ENCODE measurements at regions of chr1 and their contacts with region 1.

Region 1: DNA sequence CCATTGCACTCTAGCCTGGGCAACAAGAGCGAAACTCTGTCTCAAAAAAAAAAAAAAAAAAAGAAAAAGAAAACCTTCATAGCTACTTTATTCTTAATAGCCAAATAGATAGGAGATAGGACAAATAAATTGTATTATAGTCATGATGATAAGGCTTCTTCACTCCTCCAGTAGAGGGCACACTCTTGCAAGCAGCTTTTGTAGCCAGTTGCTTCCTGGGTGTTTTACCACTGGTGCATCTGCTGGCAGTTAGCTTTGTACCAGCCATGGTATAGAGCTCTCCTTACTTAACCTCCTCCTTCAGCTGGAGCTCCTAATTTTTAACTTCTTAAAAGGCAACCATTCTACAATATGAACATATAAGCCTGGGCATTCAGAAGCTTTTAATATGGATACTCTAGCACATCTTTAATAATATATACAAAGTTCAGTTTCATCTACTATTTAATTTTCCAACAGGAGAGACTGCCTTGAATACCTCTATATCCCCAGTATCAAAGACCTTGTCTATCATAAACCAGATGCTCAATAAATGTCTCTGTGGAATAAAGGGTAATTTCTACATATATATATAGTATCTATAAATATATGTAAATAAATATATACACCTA is 35.8 kb downstream of the EVI5 start:
- DNase-seq: no peak
- ATAC-seq: peak in 1 of 2 donors; percentile 83
- H3K4me3 ChIP-seq: no peak overlapping the region
- H3K27ac ChIP-seq: no peak overlapping the region
- H3K4me1 ChIP-seq: peaks cover 3 to 11% of the 10 kb centered on the region in 2 donors
- H3K27me3 ChIP-seq: no peaks in the 10 kb centered on the region
- CTCF ChIP-seq: peak; percentile 12 to 60 (median 38)
- POLR2A ChIP-seq: no peak

Region 2: DNA sequence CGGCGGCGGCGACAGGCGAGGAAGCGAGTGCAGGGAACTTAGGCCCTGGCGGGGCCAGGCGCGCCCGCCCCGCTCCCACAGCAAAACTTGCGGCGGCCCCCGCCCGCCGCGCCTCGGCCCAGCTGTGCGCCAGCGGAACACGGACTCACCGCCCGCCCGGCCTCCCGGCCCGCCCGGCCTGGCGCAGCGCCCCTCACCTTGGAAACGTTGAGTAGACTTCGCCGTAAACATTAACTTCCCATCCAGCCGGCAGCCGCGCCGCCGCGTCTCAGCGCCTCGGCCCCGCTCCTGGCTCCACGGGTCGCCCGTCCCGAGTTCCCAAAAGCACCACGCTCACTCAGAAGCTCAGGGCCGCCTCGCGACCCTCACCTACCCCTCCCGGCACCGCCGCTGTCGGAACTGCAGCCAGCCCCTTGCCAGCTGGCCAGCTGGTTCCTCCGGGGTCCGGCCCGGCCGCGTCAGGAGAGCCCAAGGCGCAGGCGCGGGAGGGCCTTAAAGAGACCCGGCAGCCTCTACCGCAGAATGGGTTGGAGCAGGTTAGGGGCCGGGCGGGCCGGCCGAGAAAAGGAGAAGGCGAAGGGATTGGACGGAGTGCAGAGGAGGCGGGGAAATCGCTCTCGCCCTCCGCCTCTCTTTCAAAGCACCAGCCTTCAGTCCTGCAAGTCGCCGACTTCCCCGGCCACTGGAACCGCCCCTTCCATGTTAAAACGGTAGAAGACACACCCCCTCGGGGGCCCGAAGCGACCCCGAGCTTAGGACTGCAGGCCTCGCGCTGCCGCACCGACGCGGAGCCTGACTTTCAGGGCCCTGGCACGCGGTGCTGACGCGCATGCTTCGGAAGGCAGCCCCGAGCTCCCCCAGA is 35.7 kb after region 1 on chr1 and contains the start of gene EVI5:
- in situ Hi-C with region 1: no loop called
- intact Hi-C with region 1: loop called (anchors 5 kb)
- DNase-seq: peak; percentile 91 to 93
- ATAC-seq: peak; percentile 94
- H3K4me3 ChIP-seq: peak within 1 kb of the TSS; percentile 82 to 98 (median 88)
- H3K27ac ChIP-seq: peak within 1 kb of the TSS; percentile 92 to 98 (median 94)
- H3K4me1 ChIP-seq: peaks cover 14 to 22% of the 10 kb centered on the region in 2 donors
- H3K27me3 ChIP-seq: no peaks in the 10 kb centered on the region
- CTCF ChIP-seq: peak in 2 of 5 experiments; percentile 30 to 41
- POLR2A ChIP-seq: peak; percentile 61 to 80
- total RNA-seq, gene EVI5: 4.6 to 12.5 (median 8.2) TPM

Region 3: DNA sequence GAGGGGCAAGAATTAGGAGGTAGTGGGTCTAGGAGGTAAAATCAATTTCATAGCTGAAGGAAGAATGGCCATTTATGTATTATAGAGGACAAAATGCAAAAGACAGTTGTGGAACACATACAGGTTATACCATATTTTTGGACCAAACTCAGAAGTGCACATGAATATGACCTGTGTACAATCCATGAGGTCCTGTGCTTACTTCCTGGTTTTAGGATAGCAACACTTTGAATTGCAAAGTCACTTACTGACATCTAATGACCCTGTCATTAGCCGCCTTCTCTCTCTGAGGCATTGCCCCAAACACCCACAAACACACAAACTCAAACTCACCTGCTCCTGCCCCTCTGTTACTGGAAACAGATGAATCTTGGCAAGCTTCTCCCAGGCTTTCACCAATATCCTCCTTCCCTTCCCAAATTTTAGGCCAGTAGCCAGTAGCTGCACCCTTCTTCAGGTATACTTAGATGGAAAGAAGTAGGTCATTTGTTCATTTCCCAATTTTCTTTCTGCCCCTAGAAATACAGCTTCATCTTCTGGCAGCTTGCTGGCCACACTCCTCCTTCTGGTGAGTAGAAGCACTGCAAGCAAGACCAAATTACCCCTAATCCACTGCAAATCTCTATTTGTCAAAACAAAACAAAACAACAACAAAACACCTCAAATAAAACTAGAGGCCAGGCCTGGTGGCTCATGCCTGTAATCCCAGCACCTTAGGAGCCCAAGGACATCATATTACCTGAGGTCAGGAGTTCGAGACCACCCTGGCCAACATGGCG is 69.0 kb after region 1 on chr1:
- in situ Hi-C with region 1: no loop called
- intact Hi-C with region 1: loop called (anchors 1 kb)
- DNase-seq: no peak
- ATAC-seq: no peak
- H3K4me3 ChIP-seq: no peak overlapping the region
- H3K27ac ChIP-seq: no peak overlapping the region
- H3K4me1 ChIP-seq: no peaks in the 10 kb centered on the region
- H3K27me3 ChIP-seq: no peaks in the 10 kb centered on the region
- CTCF ChIP-seq: peak; percentile 22 to 66 (median 54)
- POLR2A ChIP-seq: no peak

Measured in gastrocnemius medialis (tissue), 4 donors.